ENCODE measurements at regions of chr11 and their contacts with region 1.

Region 1: DNA sequence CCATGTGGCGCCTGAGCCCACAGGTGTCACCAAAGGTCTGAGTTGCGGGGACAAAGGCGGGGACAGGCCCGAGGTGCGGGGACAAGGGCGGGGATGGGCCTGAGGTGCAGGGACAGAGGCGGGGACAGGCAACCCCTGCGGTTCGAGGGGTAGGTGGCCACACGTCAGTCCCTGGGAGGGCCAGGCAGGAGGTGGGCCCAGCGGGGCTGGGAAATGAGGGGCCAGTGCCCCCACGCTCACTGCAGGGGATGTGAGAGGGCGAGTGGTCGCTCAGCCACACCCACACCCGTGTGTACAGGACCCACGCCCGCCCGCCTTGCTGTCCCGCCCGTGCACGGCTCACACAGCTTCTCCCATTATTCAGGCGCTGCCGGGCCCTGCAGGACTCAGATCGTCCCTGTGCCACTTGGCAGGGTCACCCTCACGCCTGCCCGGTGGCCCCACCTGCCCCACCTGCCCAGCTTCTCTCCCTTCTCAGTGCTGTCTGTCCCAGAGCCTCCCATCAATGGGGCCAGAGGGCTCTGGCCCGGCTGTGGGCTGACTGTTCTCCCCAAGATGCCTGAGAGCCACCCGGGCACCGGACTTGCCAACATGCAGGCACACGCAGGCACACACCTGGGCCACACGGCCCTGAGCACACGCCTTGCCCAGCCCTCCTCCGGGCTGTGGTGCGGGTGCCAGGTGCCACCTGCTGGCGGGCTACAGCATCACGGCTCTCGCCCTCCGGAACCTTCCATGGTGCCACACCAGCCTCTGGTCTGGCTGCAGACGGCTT is 14.2 kb upstream of the MUC6 start:
- DNase-seq: peak; percentile 93
- H3K4me3 Mint-ChIP-seq: no peak overlapping the region
- H3K27ac Mint-ChIP-seq: no peak overlapping the region
- H3K4me1 Mint-ChIP-seq: peaks cover 2% of the 10 kb centered on the region
- H3K27me3 Mint-ChIP-seq: peaks cover 2% of the 10 kb centered on the region

Region 2: GRCh38 chr11:848380-848931 is 202.3 kb before region 1 on chr11:
- intact Hi-C with region 1: loop called (anchors 1 kb)
- DNase-seq: peak; percentile 92
- H3K4me3 Mint-ChIP-seq: peak overlapping the region; percentile 73
- H3K27ac Mint-ChIP-seq: no peak overlapping the region
- H3K4me1 Mint-ChIP-seq: peaks cover 5% of the 10 kb centered on the region
- H3K27me3 Mint-ChIP-seq: peaks cover 7% of the 10 kb centered on the region

Region 3: GRCh38 chr11:925496-926321 is 125.1 kb before region 1 on chr11 and contains the start of gene AP2A2:
- intact Hi-C with region 1: loop called (anchors 2 kb)
- DNase-seq: peak; percentile 98
- H3K4me3 Mint-ChIP-seq: peak within 1 kb of the TSS; percentile 84
- H3K27ac Mint-ChIP-seq: peak within 1 kb of the TSS; percentile 58
- H3K4me1 Mint-ChIP-seq: peaks cover 17% of the 10 kb centered on the region
- H3K27me3 Mint-ChIP-seq: no peaks in the 10 kb centered on the region
- total RNA-seq, gene AP2A2: 51.4 and 53.8 TPM in 2 replicates

Region 4: GRCh38 chr11:1271002-1271401 is 220.2 kb after region 1 on chr11:
- intact Hi-C with region 1: no loop called
- DNase-seq: no peak
- H3K4me3 Mint-ChIP-seq: no peak overlapping the region
- H3K27ac Mint-ChIP-seq: no peak overlapping the region
- H3K4me1 Mint-ChIP-seq: no peaks in the 10 kb centered on the region
- H3K27me3 Mint-ChIP-seq: no peaks in the 10 kb centered on the region